ENCODE measurements at regions of chr7 and their contacts with region 1.

Region 1: GRCh38 chr7:117750612-117751563 is 122.4 kb downstream of the CTTNBP2 start:
- DNase-seq: no peak
- ATAC-seq: no peak
- H3K4me3 ChIP-seq: no peak overlapping the region
- H3K27ac ChIP-seq: no peak overlapping the region
- H3K4me1 ChIP-seq: no peaks in the 10 kb centered on the region
- H3K27me3 ChIP-seq: no peaks in the 10 kb centered on the region
- CTCF ChIP-seq: peak in 2 of 5 experiments; percentile 3 to 17
- POLR2A ChIP-seq: no peak

Region 2: GRCh38 chr7:118104812-118105441 is 354.0 kb after region 1 on chr7:
- in situ Hi-C with region 1: loop called in 1 of 4 experiments (anchors 25 kb)
- intact Hi-C with region 1: no loop called
- DNase-seq: no peak
- ATAC-seq: no peak
- H3K4me3 ChIP-seq: no peak overlapping the region
- H3K27ac ChIP-seq: no peak overlapping the region
- H3K4me1 ChIP-seq: no peaks in the 10 kb centered on the region
- H3K27me3 ChIP-seq: no peaks in the 10 kb centered on the region
- CTCF ChIP-seq: peak in 1 of 5 experiments; percentile 18
- POLR2A ChIP-seq: no peak

Measured in gastrocnemius medialis (tissue), 4 donors.